ENCODE measurements at regions of chr1 and their contacts with region 1.

Region 1: DNA sequence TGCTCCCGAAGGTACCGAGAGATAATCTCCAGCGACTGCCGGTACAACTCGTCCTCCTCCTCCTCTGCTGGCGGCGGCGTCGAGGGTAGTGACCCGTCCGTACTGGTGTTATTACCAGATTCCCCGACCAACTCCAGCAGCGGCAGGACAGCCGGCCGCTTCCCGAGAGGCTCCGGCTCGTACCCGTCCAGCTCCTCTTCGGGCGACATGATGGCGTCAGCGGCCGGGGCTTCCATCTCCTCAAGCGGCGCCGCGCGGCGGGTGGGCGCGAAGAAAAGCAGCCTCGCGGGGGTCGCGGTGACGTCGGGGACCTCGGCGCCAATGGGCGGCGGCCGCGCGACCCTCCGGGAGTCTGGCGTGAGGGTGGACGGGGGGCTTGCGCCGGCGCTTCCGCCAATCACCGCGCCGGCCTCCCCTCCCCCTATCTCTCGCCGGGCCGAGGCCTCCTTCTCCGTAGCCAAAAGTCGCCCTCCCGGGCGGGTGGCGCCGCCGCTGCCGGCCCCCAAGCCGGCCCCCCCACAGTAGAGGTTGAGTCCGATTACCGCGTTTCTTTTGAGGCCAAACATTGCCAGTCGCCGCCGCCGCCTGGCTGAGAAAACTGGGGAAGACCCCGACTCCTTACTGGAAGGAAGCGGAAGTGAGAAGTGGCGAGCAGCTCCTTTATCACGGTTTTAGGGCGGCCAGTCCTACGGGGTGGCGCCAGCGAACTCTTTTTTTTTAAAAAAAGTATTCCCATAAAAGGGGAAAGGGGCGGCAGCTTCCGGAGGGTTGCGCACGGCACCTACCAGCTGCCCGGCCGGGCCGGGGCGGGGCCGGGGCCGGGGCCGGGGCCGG is at the start of gene MCL1:
- DNase-seq: peak; percentile 91
- H3K4me3 ChIP-seq: peak within 1 kb of the TSS; percentile 97
- H3K27ac ChIP-seq: peak within 1 kb of the TSS; percentile 95
- H3K27me3 ChIP-seq: no peaks in the 10 kb centered on the region
- CTCF ChIP-seq: no peak
- polyA plus RNA-seq, gene MCL1: 107 and 138 TPM in 2 replicates

Region 2: DNA sequence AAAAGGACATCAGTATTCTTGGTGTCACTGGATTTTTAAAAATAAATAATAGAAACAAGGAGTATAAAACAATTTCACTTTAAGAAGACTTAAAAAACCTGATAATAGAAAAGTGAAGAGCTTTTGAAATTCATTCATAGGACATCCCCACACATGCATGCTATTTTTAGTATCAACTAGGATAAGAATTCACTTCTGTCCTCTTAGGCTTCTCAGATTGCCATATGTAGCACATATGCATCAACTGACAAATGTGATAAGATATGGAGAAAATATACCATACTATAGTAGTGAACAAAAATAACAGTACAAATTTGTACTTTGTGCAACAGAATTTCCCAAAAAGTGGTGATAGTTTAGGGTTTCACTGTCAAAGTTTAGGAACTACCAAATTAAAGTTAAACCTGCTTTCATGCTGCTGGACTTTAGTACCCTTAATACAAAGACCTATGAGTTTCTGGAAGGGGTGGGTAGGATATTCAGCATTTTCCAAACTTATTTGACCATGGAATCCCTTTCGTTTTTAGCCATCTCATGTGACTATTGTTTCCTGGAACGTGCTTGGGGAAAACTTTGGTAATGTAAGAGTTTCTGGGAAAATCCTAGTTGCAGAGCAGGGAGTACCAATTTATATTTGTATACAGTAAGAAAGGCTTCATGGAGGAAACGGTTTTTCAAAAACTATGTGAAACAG is 195.4 kb before region 1 on chr1:
- CTCF ChIA-PET with region 1: no interaction called
- POLR2A ChIA-PET with region 1: no interaction called
- DNase-seq: no peak
- H3K4me3 ChIP-seq: no peak overlapping the region
- H3K27ac ChIP-seq: no peak overlapping the region
- H3K27me3 ChIP-seq: no peaks in the 10 kb centered on the region
- CTCF ChIP-seq: no peak

Region 3: GRCh38 chr1:150567717-150568593 is 11.2 kb before region 1 on chr1:
- CTCF ChIA-PET with region 1: interaction called, 4 read pairs
- POLR2A ChIA-PET with region 1: interaction called, 130 read pairs
- DNase-seq: peak; percentile 95
- H3K4me3 ChIP-seq: peak overlapping the region; percentile 48
- H3K27ac ChIP-seq: peak overlapping the region; percentile 97
- H3K27me3 ChIP-seq: no peaks in the 10 kb centered on the region
- CTCF ChIP-seq: no peak

Region 4: GRCh38 chr1:150603711-150604110 is 24.5 kb after region 1 on chr1:
- CTCF ChIA-PET with region 1: no interaction called
- POLR2A ChIA-PET with region 1: interaction called, 16 read pairs
- DNase-seq: no peak
- H3K4me3 ChIP-seq: no peak overlapping the region
- H3K27ac ChIP-seq: peak overlapping the region; percentile 59
- H3K27me3 ChIP-seq: no peaks in the 10 kb centered on the region
- CTCF ChIP-seq: no peak

Region 5: DNA sequence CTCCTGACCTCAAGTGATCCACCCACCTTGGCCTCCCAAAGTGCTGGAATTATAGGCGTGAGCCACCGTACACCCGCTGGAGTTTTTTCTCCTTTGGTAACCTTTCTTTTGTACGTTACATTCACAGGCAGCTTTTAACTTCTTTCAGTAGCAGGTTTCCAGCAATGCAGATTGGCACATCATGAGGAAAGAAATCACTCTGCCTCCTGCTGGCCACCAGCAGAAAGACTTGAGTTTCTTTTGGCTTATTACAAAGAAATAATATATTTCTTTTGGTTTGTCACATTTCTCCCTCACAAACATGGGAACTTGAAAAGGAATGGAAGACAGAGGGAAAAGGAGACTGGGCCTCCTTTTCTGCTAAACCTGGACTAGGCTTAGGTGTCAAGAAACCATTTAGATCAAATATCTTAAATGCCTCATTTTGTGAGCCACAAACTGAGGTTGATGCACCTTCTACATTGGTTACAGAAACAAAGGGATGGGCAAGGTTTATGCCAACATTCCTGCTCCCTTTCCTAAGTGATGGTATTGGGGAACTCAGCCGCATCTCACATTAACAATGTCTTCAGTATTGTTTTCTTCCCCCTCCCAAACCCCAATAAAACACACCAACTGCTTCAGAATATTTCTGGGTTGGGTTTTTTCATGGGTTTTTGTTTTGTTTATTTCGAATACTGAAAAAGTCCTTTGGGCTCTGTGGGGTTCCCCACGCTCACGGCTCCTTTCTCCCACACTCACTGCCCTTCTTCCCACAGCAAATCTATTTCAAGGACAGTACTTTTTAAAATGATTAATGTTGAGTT is 42.5 kb after region 1 on chr1:
- CTCF ChIA-PET with region 1: interaction called, 17 read pairs
- POLR2A ChIA-PET with region 1: interaction called, 59 read pairs
- DNase-seq: no peak
- H3K4me3 ChIP-seq: no peak overlapping the region
- H3K27ac ChIP-seq: no peak overlapping the region
- H3K27me3 ChIP-seq: no peaks in the 10 kb centered on the region
- CTCF ChIP-seq: peak; percentile 75

Region 6: DNA sequence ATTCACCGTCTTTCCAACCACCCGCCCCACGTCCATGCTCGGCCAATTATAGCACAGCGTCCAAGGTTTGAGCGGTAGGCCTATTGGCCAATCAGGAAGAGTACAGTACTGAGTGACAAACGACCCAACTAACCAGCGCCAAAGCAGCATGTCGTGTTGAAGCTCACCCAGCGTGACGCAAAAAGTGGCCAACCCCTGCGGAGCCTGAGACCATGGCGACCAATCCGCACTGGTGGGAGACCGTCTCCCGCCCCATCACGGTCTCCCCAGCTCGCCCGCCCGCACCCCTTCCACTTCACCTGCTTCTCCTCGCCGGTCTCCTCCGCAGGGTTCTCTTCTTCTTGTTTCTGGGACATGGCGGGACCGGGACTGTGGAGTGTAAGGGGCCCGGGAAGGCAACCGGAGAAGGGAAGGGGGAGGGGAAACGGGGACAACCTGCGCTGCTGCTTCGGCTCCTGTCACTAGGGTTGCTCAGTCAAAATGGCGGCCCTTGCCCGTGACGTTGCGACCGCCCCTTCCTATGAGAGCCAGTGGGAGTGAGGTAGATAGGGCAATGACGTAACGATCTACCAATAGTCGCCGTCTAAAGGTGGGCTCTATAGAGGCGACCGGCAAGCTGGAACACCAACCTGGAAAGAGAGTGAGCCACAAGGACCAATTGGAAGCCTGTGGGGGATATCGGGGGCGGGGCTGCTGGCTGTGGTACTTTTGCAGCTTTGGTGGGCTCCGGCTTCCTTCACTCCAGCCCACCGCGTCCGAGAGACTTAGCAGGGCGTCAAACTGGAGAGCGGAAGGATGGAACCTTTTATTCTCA is 50.1 kb after region 1 on chr1 and contains the start of gene ENSA:
- CTCF ChIA-PET with region 1: no interaction called
- POLR2A ChIA-PET with region 1: interaction called, 40 read pairs
- DNase-seq: peak; percentile 99
- H3K4me3 ChIP-seq: peak within 1 kb of the TSS; percentile 78
- H3K27ac ChIP-seq: peak within 1 kb of the TSS; percentile 89
- H3K27me3 ChIP-seq: no peaks in the 10 kb centered on the region
- CTCF ChIP-seq: no peak
- polyA plus RNA-seq, gene ENSA: 40.7 and 53.7 TPM in 2 replicates

Measured in AG04450 (cell line).